ENCODE measurements at regions of chr1 and their contacts with region 1.

Region 1: GRCh38 chr1:214328770-214329469 is 48.0 kb downstream of the SMYD2 start:
- DNase-seq: peak; percentile 77
- H3K4me3 ChIP-seq: no peak overlapping the region
- H3K27ac ChIP-seq: no peak overlapping the region
- H3K4me1 ChIP-seq: peaks cover 7% of the 10 kb centered on the region
- H3K27me3 ChIP-seq: no peaks in the 10 kb centered on the region
- CTCF ChIP-seq: peak; percentile 85 to 94

Region 2: GRCh38 chr1:213122514-213122929 is 1206.4 kb before region 1 on chr1:
- CTCF ChIA-PET with region 1: no interaction called
- dilution Hi-C with region 1: no loop called
- in situ Hi-C with region 1: no loop called
- intact Hi-C with region 1: loop called (anchors 5 kb)
- DNase-seq: peak; percentile 24
- H3K4me3 ChIP-seq: no peak overlapping the region
- H3K27ac ChIP-seq: no peak overlapping the region
- H3K4me1 ChIP-seq: peaks cover 21% of the 10 kb centered on the region
- H3K27me3 ChIP-seq: no peaks in the 10 kb centered on the region
- CTCF ChIP-seq: peak; percentile 32 to 43

Region 3: DNA sequence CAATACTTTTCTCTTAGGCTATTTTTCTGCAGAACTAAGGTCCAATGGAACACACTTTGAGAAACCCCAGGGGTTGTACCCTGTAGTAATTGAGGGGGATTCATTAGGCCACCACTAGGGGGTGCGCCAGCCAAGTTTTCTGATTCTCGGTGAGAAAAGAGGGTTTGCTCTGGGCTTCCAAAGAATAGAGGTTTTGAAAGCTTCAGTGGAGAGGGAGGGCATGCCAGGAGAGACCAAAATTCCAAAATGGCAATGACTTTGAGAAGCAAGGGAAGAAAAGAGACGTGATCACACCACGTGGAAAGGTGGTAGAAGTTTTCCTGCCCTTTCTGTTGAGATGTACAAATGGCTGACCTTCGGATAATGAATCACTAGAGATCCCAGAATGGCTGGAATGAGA is 954.6 kb before region 1 on chr1:
- CTCF ChIA-PET with region 1: no interaction called
- dilution Hi-C with region 1: no loop called
- in situ Hi-C with region 1: loop called in 1 of 2 experiments (anchors 10 kb)
- intact Hi-C with region 1: loop called (anchors 2 kb)
- DNase-seq: peak; percentile 23
- H3K4me3 ChIP-seq: no peak overlapping the region
- H3K27ac ChIP-seq: no peak overlapping the region
- H3K4me1 ChIP-seq: no peaks in the 10 kb centered on the region
- H3K27me3 ChIP-seq: no peaks in the 10 kb centered on the region
- CTCF ChIP-seq: peak; percentile 83 to 90

Region 4: GRCh38 chr1:214213136-214213535 is 115.8 kb before region 1 on chr1:
- CTCF ChIA-PET with region 1: interaction called, 33 read pairs
- dilution Hi-C with region 1: loop called (anchors 5 kb)
- in situ Hi-C with region 1: loop called (anchors 5 kb)
- intact Hi-C with region 1: loop called (anchors 1 kb)
- DNase-seq: peak; percentile 95
- H3K4me3 ChIP-seq: no peak overlapping the region
- H3K27ac ChIP-seq: peak overlapping the region; percentile 60
- H3K4me1 ChIP-seq: peaks cover 52% of the 10 kb centered on the region
- H3K27me3 ChIP-seq: no peaks in the 10 kb centered on the region
- CTCF ChIP-seq: peak in 1 of 2 donors; percentile 31

Region 5: DNA sequence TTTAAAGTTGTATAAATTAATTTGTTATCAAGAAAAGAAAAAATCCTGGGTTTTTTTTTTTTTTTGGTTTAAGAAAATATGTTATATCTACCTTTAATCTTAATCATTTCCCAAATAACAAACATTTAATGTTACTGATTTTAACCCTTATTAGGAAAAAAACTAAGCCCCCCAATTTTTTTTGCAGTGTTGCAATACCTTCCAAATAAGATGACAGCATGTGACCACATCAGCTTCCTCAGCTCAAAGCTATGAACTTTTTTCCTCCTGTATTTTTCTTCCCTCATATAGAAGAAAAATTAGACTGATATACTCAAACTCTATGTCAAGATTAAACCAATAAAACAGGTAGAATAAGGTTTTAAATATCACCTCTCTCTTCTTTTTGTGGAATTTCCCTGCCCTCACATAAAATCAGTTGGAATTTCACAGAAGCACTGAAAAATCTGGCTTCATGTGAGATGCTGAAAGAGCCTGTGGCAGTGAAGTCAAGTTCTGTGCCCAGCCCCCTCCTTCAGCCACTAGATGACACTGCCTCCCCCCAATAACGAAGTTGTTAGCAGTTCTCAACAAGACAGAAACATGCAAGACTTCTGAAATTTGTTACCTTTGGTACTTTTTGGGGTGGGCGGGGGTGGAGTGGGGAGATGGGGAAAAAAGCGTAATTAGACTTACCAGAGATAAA is 57.6 kb before region 1 on chr1:
- CTCF ChIA-PET with region 1: no interaction called
- dilution Hi-C with region 1: no loop called
- in situ Hi-C with region 1: loop called (anchors 10 kb)
- intact Hi-C with region 1: no loop called
- DNase-seq: no peak
- H3K4me3 ChIP-seq: no peak overlapping the region
- H3K27ac ChIP-seq: no peak overlapping the region
- H3K4me1 ChIP-seq: no peaks in the 10 kb centered on the region
- H3K27me3 ChIP-seq: peaks cover 1% of the 10 kb centered on the region
- CTCF ChIP-seq: no peak

Region 6: GRCh38 chr1:214602764-214603657 is 274.1 kb after region 1 on chr1 and contains the start of gene CENPF:
- CTCF ChIA-PET with region 1: interaction called, 3 read pairs
- dilution Hi-C with region 1: no loop called
- in situ Hi-C with region 1: no loop called
- intact Hi-C with region 1: loop called (anchors 5 kb)
- DNase-seq: peak; percentile 99
- H3K4me3 ChIP-seq: peak within 1 kb of the TSS; percentile 68 to 75 (median 75)
- H3K27ac ChIP-seq: peak within 1 kb of the TSS; percentile 88
- H3K4me1 ChIP-seq: peaks cover 18% of the 10 kb centered on the region
- H3K27me3 ChIP-seq: no peaks in the 10 kb centered on the region
- CTCF ChIP-seq: peak in 1 of 2 donors; percentile 33
- total RNA-seq, gene CENPF: 1.7 to 52.4 TPM

Region 7: GRCh38 chr1:215517441-215517891 is 1188.5 kb after region 1 on chr1:
- CTCF ChIA-PET with region 1: interaction called, 12 read pairs
- dilution Hi-C with region 1: no loop called
- in situ Hi-C with region 1: no loop called
- intact Hi-C with region 1: no loop called
- DNase-seq: peak; percentile 56
- H3K4me3 ChIP-seq: no peak overlapping the region
- H3K27ac ChIP-seq: no peak overlapping the region
- H3K4me1 ChIP-seq: no peaks in the 10 kb centered on the region
- H3K27me3 ChIP-seq: no peaks in the 10 kb centered on the region
- CTCF ChIP-seq: peak; percentile 65 to 79

Measured in mammary epithelial cell (primary cell).